ENCODE measurements at regions of chr1 and their contacts with region 1.

Region 1: DNA sequence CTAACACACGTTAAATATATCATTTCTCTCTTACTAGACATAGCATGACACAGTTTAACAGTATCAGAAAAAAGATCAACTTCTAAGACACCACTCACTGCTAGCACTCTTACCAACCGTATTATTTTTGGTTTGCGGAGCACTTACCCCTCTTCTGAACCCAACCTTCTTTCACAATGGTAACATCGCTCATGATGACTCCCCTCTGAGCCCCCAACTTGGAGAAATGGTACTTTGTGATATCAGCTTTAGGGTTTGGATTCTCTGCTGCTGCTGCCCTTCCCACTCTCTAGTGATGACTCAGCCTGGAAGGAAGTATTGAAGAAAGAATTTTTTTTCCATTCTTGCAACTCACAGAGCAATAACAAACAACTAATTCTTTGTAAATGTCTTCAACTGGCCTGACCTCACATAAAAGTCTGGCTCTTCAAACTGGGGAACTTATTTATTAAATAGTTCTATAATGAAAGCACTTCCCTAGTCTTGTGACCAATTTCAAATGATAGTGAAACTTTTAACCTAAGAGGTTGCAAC is 7.0 kb downstream of the AKT3 start:
- DNase-seq: peak; percentile 89
- ATAC-seq: peak; percentile 92
- H3K4me3 ChIP-seq: peak overlapping the region; percentile 25; the same call in 1 of the 2 replicates
- H3K27ac ChIP-seq: peak overlapping the region; percentile 78
- H3K4me1 ChIP-seq: peaks cover 5% of the 10 kb centered on the region
- H3K27me3 ChIP-seq: no peaks in the 10 kb centered on the region
- CTCF ChIP-seq: no peak
- POLR2A ChIP-seq: no peak
- RAD21 ChIP-seq: no peak

Region 2: GRCh38 chr1:243798726-243799125 is 44.3 kb before region 1 on chr1:
- CTCF ChIA-PET with region 1: no interaction called
- POLR2A ChIA-PET with region 1: no interaction called
- dilution Hi-C with region 1: no loop called
- in situ Hi-C with region 1: no loop called
- intact Hi-C with region 1: loop called (anchors 5 kb)
- DNase-seq: peak; percentile 93
- ATAC-seq: peak; percentile 86
- H3K4me3 ChIP-seq: no peak overlapping the region
- H3K27ac ChIP-seq: no peak overlapping the region
- H3K4me1 ChIP-seq: peaks cover 7% of the 10 kb centered on the region
- H3K27me3 ChIP-seq: no peaks in the 10 kb centered on the region
- CTCF ChIP-seq: no peak
- POLR2A ChIP-seq: no peak
- RAD21 ChIP-seq: no peak

Region 3: DNA sequence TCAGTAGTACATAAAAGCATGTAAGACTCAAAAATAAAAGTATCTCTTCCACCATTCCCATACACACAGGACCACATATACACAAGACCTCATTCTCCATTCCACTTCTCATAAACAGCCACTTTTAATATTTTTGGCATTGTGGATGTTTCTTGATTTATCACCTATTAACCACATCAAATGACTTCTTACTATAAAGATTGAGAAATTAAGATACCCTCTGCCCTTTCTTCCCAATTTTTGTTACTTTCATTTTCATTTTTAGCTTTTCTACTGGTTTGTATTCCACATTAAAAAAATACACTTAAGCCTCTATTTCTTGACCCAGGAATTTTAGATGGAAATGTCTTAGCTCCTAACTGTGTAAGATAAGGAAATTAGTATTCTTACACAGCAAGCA is 15.8 kb before region 1 on chr1:
- CTCF ChIA-PET with region 1: no interaction called
- POLR2A ChIA-PET with region 1: no interaction called
- dilution Hi-C with region 1: no loop called
- in situ Hi-C with region 1: no loop called
- intact Hi-C with region 1: no loop called
- DNase-seq: no peak
- ATAC-seq: no peak
- H3K4me3 ChIP-seq: no peak overlapping the region
- H3K27ac ChIP-seq: no peak overlapping the region
- H3K4me1 ChIP-seq: peaks cover 2% of the 10 kb centered on the region
- H3K27me3 ChIP-seq: no peaks in the 10 kb centered on the region
- CTCF ChIP-seq: no peak
- POLR2A ChIP-seq: no peak
- RAD21 ChIP-seq: no peak

Region 4: DNA sequence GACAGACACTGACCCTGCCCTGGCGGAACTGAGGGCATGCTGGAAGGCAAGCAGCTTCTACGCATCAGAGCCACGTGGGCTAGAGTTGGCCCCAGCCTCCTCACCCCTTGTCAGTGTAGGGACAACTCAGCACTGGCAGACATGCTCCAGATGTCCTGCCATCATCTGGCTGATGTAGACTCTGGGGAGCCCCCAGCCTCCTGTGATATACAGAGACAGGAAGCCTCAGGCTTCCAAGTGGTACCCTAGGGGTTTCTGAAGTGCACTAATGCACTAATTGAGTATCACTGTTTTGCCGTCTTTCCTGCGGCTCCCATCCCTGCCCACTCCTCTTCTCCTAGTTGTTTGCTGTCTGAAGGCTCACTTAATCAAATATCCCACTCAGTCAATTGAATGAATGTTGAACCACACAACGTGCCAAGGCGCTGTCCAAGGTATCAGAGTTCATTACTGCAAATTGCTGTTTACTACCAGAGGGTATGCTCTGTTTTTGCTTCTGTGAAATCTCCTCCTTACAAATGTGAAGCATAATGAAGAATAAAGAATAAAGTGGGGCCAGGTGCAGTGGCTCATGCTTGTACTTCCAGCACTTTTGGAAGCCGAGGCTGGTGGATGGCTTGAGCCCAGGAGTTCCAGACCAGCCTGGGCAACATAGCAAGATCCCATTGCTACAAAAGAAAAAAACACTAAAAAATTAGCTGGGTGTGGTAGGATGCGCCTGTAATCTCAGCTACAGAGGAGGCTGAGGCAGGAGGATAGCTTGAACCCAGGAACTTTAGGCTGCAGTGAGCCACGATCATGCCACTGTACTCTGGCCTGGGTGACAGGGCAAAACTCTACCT is 131.6 kb after region 1 on chr1:
- CTCF ChIA-PET with region 1: no interaction called
- POLR2A ChIA-PET with region 1: no interaction called
- dilution Hi-C with region 1: no loop called
- in situ Hi-C with region 1: no loop called
- intact Hi-C with region 1: no loop called
- DNase-seq: peak; percentile 24
- ATAC-seq: no peak
- H3K4me3 ChIP-seq: no peak overlapping the region
- H3K27ac ChIP-seq: no peak overlapping the region
- H3K4me1 ChIP-seq: no peaks in the 10 kb centered on the region
- H3K27me3 ChIP-seq: peaks cover 3% of the 10 kb centered on the region
- CTCF ChIP-seq: no peak
- POLR2A ChIP-seq: no peak
- RAD21 ChIP-seq: no peak

Region 5: GRCh38 chr1:244021947-244022700 is 179.1 kb after region 1 on chr1:
- CTCF ChIA-PET with region 1: no interaction called
- POLR2A ChIA-PET with region 1: interaction called, 11 read pairs
- dilution Hi-C with region 1: no loop called
- in situ Hi-C with region 1: no loop called
- intact Hi-C with region 1: no loop called
- DNase-seq: peak; percentile 27
- ATAC-seq: no peak; the same call in 1 of the 2 replicates
- H3K4me3 ChIP-seq: no peak overlapping the region
- H3K27ac ChIP-seq: no peak overlapping the region
- H3K4me1 ChIP-seq: no peaks in the 10 kb centered on the region
- H3K27me3 ChIP-seq: peaks cover 16% of the 10 kb centered on the region
- CTCF ChIP-seq: no peak
- POLR2A ChIP-seq: no peak
- RAD21 ChIP-seq: no peak